ENCODE measurements at regions of chr20 and their contacts with region 1.

Region 1: GRCh38 chr20:14055127-14055742 is 59.9 kb downstream of the MACROD2 start:
- DNase-seq: peak; percentile 65
- H3K4me3 ChIP-seq: no peak overlapping the region
- H3K27ac ChIP-seq: no peak overlapping the region
- H3K4me1 ChIP-seq: 0 out of 2 replicates have a peak, but pooled peaks cover 5% of the 10 kb centered on the region
- H3K27me3 ChIP-seq: no peaks in the 10 kb centered on the region

Region 2: GRCh38 chr20:13819885-13820645 is 235.2 kb before region 1 on chr20:
- in situ Hi-C with region 1: loop called (anchors 10 kb)
- DNase-seq: peak; percentile 70
- H3K4me3 ChIP-seq: no peak overlapping the region
- H3K27ac ChIP-seq: no peak overlapping the region
- H3K4me1 ChIP-seq: peaks cover 13% of the 10 kb centered on the region
- H3K27me3 ChIP-seq: no peaks in the 10 kb centered on the region

Region 3: DNA sequence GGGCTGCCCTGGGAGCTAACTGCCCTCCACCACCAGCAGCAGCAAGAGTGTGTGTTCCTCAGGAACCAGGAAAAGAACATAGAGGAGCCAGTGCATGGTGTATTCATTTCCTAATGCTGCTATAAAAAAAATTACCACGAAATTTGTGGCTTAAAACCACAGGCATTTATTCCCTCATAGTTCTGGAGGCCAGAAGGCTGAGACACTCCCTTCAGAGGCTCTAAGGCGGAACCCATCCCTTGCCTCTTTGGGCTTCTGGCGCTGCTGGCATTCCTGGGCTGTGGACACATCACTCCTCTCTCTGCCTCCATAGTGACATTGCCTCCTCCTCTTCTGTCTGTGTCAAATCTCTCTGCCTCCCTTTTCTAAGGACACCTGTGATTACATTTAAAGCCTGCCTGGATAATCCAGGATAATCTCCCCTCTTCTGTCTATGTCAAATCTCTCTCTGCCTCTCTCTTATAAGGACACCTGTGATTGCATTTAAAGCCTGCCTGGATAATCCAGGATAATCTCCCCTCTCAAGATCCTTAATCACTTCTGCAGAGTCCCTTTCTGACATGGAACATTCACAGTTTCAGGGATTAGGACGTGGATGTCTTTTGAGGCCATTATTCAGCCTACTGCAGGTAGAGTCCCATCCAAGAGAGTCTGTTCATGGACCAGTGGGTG is 215.7 kb before region 1 on chr20:
- in situ Hi-C with region 1: no loop called
- DNase-seq: peak; percentile 91
- H3K4me3 ChIP-seq: no peak overlapping the region
- H3K27ac ChIP-seq: peak overlapping the region; percentile 22; the same call in 1 of the 2 replicates
- H3K4me1 ChIP-seq: peaks cover 16% of the 10 kb centered on the region
- H3K27me3 ChIP-seq: no peaks in the 10 kb centered on the region

Region 4: DNA sequence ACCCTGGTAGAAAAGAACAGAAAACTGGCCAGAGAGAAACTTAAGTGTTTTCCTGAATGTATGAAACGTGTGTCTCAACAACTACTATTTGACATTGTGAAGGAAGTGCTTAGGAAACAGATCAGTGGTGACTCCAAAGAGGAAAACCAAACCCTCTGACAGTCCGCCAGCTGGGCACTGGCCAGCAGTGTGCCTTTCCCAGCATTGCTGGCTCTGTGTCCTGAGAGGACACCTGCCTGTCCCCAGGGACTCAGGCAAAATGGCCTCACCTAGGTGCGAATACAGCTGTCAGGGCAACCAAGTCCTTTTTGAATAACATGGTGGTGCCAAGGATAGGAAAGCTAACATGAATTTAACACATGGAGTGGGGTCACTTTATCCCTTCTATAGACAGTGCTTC is 197.9 kb before region 1 on chr20:
- in situ Hi-C with region 1: no loop called
- DNase-seq: peak; percentile 30
- H3K4me3 ChIP-seq: no peak overlapping the region
- H3K27ac ChIP-seq: no peak overlapping the region
- H3K4me1 ChIP-seq: peaks cover 25% of the 10 kb centered on the region
- H3K27me3 ChIP-seq: no peaks in the 10 kb centered on the region

Measured in GM23248 (cell line).